Activated CD4-positive, alpha-beta T cell treated with anti-CD3 and anti-CD28 coated beads for 36 hours (primary cell): ENCODE measurements at regions of chr5 and their contacts with region 1.

Region 1: DNA sequence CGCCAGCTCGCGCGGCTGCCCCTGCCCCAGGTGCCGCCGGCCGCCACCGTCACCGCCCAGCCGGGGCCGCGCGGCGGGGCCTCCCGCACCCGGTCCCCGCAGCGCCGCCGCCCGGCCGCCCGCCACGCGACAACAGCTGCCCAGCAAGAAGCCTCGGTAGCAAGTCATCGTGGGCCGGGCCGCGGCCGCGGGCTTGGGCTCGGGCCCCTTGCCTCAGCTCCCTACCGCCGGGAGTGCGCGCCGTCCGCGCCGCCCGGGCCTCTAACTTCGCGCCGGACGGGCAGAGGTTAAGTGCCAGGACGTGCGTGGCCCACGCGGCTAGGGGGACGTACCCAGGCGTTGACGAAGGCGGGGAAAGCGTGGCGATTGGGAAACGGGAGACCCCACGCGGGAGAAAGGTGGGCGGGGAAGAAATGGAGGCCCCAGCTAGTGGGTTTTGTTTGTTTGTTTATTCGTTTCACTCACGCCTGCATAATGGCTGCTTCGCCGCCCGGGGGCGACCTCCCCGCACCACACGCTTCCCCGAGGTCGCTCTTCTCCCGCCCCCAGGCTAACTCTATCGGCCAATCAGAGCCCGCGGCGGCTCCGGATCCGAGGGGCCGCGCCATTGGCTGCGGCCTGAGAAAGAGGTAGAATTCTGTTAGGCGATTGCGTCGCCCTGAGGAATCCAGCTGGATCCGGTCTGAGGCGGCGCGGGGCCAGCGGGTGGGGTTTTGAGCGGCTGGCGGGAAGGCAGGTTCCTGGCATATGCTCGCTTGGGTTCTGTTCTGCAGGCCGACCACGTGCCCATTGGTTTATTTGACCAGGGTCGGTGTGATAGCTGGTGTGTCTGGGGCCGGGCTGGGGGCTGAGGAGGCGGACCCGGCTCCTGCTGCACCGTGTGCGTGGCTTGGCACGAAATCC is at the start of gene NADK2:
- DNase-seq: peak; percentile 97
- ATAC-seq: peak; percentile 94
- H3K4me3 Mint-ChIP-seq: peak within 1 kb of the TSS; percentile 76
- H3K27ac Mint-ChIP-seq: peak within 1 kb of the TSS; percentile 98
- H3K4me1 Mint-ChIP-seq: peaks cover 44% of the 10 kb centered on the region
- H3K27me3 Mint-ChIP-seq: no peaks in the 10 kb centered on the region
- total RNA-seq, gene NADK2: 16.1 to 19.3 TPM

Region 2: GRCh38 chr5:34838785-34839714 is 1402.8 kb before region 1 on chr5 and contains the start of gene TTC23L:
- CTCF ChIA-PET with region 1: no interaction called
- POLR2A ChIA-PET with region 1: no interaction called
- intact Hi-C with region 1: loop called in 1 of 2 experiments (anchors 1 kb)
- DNase-seq: peak; percentile 95
- ATAC-seq: peak; percentile 95
- H3K4me3 Mint-ChIP-seq: peak within 1 kb of the TSS; percentile 80
- H3K27ac Mint-ChIP-seq: peak within 1 kb of the TSS; percentile 95
- H3K4me1 Mint-ChIP-seq: peaks cover 13% of the 10 kb centered on the region
- H3K27me3 Mint-ChIP-seq: no peaks in the 10 kb centered on the region
- total RNA-seq, gene TTC23L: 0.26 to 0.30 TPM

Region 3: DNA sequence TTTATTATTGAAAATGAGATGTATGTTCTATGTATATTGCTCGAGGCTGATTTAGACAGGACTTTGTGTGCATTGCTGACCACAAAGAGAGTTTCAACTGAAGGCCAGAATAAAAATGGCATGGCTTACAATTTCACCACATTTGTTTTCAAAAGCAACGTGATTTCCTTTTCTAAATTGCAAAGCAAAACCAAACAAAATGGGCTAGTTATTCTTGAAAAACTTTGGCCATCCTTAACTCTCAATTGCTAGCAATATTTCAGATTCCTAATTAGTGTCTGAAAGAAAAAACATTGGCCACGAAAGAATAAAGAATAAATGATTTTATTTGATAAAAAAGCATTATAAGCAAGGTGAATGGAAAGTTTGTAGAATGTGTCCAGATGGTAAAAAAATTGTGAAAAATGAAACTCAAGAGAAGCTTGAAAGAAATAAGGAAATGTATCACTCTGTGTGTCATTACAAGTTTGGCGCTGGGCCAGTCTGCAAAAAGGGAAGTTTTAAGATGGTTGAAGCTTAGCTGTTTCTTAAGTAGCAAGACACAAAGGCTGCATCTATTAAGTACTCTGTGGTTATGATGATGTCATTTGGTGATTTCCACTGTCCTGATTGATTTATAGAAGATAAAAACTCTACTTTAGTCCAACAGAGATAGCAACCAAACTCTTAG is 922.4 kb before region 1 on chr5:
- CTCF ChIA-PET with region 1: no interaction called
- POLR2A ChIA-PET with region 1: no interaction called
- intact Hi-C with region 1: loop called in 1 of 2 experiments (anchors 2 kb)
- DNase-seq: peak; percentile 92
- ATAC-seq: peak; percentile 91
- H3K4me3 Mint-ChIP-seq: no peak overlapping the region
- H3K27ac Mint-ChIP-seq: no peak overlapping the region
- H3K4me1 Mint-ChIP-seq: peaks cover 30% of the 10 kb centered on the region
- H3K27me3 Mint-ChIP-seq: peaks cover 14% of the 10 kb centered on the region

Region 4: DNA sequence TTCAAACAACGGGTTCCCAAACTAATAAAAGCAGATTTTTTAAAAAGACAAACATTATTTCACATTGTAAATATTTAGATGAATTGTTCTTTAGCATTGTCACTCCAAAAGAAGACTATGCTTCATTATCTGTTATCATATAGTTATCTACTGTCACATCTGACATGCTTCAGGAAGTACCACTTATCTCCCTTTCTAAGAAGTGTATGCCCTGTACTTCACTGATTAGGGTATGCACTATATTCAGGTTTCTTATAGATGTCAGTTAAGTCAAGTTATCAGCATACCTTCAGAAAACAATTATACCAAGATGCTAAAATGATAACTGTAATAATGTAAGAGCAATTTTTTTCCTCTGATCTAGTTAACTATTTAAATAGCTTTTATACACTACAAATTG is 130.6 kb before region 1 on chr5:
- CTCF ChIA-PET with region 1: no interaction called
- POLR2A ChIA-PET with region 1: no interaction called
- intact Hi-C with region 1: no loop called
- DNase-seq: no peak
- ATAC-seq: no peak
- H3K4me3 Mint-ChIP-seq: no peak overlapping the region
- H3K27ac Mint-ChIP-seq: no peak overlapping the region
- H3K4me1 Mint-ChIP-seq: no peaks in the 10 kb centered on the region
- H3K27me3 Mint-ChIP-seq: no peaks in the 10 kb centered on the region

Region 5: GRCh38 chr5:36151434-36152323 is 90.2 kb before region 1 on chr5 and contains the starts of genes LMBRD2 and SKP2:
- CTCF ChIA-PET with region 1: interaction called, 18 read pairs
- POLR2A ChIA-PET with region 1: interaction called, 16 read pairs
- intact Hi-C with region 1: loop called (anchors 1 kb)
- DNase-seq: peak; percentile 98
- ATAC-seq: peak; percentile 99
- H3K4me3 Mint-ChIP-seq: peak within 1 kb of the TSS; percentile 97
- H3K27ac Mint-ChIP-seq: peak within 1 kb of the TSS; percentile 91
- H3K4me1 Mint-ChIP-seq: peaks cover 55% of the 10 kb centered on the region
- H3K27me3 Mint-ChIP-seq: no peaks in the 10 kb centered on the region
- total RNA-seq, gene LMBRD2: 9.3 to 10.2 TPM
- total RNA-seq, gene SKP2: 48.0 to 56.8 TPM

Region 6: DNA sequence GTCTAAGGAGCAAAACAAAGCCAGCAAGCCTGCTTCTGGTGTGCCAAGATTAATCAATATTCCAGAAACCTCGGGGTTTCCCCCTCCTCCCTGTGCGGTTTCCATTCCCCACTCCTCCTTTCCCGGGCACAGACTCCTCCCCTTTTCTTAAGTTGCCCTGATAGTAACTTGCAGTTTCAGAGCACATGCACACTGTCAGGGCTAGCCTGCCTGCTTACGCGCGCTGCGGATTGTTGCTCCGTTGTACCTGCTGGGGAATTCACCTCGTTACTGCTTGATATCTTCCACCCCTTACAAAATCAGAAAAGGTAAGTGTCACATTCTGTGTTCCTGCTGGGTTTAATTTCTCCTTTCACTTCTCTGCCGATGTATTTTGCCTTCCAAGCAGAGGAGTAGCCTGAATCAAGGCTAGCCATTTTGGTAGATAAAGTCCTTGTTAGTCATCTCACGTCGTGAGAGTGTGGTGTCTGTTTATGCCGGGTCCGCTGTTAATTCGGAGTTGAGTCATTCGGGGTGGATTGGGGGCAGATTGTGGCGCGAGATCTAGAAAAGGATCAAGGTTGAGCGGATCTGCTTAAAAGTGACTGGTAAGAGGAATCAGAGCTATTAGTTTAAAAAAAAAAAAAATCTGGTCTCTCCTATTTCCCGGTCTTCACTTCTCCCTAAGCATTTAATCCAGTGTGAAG is 364.7 kb after region 1 on chr5 and contains the start of gene SLC1A3:
- CTCF ChIA-PET with region 1: no interaction called
- POLR2A ChIA-PET with region 1: no interaction called
- intact Hi-C with region 1: loop called in 1 of 2 experiments (anchors 1 kb)
- DNase-seq: peak; percentile 77
- ATAC-seq: peak; percentile 96
- H3K4me3 Mint-ChIP-seq: peak within 1 kb of the TSS; percentile 66
- H3K27ac Mint-ChIP-seq: peak within 1 kb of the TSS; percentile 26
- H3K4me1 Mint-ChIP-seq: peaks cover 18% of the 10 kb centered on the region
- H3K27me3 Mint-ChIP-seq: peaks cover 52% of the 10 kb centered on the region
- total RNA-seq, gene SLC1A3: 0.16 TPM

Region 7: DNA sequence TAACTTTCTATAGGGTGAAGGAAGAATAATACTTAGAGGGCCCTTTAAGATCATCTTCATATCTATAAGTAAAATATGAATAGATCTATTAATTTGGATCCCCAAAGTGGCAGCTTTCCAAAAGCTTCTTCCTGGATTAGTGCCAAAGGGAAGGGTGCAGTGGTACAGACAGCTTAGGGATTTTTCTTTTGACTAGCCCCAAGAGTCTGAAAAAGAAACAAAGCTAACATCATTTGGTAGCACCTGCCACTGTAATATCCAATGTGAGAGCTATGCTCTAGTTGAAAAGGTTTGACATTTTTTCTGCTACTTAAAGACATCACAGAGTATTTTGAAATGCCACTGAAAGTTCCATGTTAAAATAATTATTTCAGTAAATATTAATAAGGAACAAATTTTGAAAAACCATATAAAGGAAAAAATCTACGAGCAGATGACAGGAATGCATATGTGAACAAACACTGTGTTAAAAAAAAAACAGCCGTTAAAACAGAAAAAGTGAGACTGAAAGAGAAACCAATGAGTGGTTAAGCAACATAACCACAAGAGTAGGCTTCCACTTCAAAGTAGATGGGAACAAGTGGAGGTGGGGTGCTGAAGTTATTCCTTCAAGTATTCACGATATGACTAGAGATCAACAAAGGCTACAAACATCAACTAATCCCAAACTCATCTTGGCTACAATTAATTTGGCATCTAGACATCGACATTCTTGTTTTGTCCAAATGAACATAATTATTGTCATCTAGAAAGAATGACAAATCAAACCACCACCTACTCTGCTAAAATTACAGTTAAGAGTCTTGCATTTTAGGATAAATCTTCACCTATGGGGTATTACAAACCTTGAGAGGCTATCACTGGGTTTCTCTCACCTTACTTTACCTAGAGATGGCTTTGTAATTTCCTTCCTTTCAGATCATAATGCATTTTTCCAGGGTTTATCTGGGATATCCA is 869.8 kb after region 1 on chr5:
- CTCF ChIA-PET with region 1: no interaction called
- POLR2A ChIA-PET with region 1: no interaction called
- intact Hi-C with region 1: loop called in 1 of 2 experiments (anchors 5 kb)
- DNase-seq: peak; percentile 23
- ATAC-seq: peak; percentile 75
- H3K4me3 Mint-ChIP-seq: peak overlapping the region; percentile 24
- H3K27ac Mint-ChIP-seq: peak overlapping the region; percentile 65
- H3K4me1 Mint-ChIP-seq: peaks cover 35% of the 10 kb centered on the region
- H3K27me3 Mint-ChIP-seq: peaks cover 11% of the 10 kb centered on the region